ENCODE measurements at regions of chr12 and their contacts with region 1.

Region 1: GRCh38 chr12:110431957-110432587 is 18.1 kb downstream of the ARPC3 start:
- DNase-seq: peak in 1 of 4 donors; percentile 28
- ATAC-seq: no peak
- H3K4me3 ChIP-seq: peak overlapping the region; percentile 36 to 43
- H3K27ac ChIP-seq: peak overlapping the region in 2 of 4 donors; percentile 51 to 66
- H3K4me1 ChIP-seq: no peaks in the 10 kb centered on the region
- H3K27me3 ChIP-seq: no peaks in the 10 kb centered on the region
- CTCF ChIP-seq: no peak
- POLR2A ChIP-seq: no peak

Region 2: DNA sequence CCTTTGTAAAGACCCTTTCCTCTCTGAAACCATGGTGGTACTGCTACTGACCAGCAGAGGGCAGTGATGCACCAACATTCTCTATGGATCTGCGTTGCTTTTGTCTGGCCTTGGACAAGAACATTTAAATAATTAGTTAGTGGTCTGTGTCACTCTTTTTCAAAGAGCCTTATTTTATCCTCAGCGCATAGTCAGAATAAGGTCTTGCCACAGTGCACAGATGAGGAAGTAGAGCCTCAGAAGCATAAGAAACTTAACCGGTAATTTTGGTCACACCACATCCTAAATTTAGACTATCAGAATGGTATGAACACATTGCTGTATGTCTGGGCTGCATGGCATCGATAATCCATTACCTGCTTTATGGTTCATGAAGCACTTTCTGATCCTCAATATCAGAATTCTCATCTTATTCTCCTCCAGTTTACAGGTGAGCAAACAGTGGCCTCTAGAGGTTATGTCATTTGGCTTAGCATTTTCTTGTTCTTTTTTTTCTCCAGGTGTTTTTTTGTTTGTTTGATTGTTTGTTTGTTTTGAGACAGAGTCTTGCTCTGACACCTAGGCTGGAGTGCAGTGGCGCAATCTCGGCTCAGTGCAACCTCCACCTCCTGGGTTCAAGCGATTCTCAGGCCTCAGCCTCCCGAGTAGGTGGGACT is 331.6 kb before region 1 on chr12:
- intact Hi-C with region 1: loop called (anchors 2 kb)
- DNase-seq: peak; percentile 67 to 77 (median 70)
- ATAC-seq: peak; percentile 74
- H3K4me3 ChIP-seq: no peak overlapping the region
- H3K27ac ChIP-seq: no peak overlapping the region
- H3K4me1 ChIP-seq: peaks cover 7% of the 10 kb centered on the region
- H3K27me3 ChIP-seq: no peaks in the 10 kb centered on the region
- CTCF ChIP-seq: peak; percentile 73 to 92 (median 87)
- POLR2A ChIP-seq: no peak

Measured in body of pancreas (tissue), 4 donors.